ENCODE measurements at regions of chr1 and their contacts with region 1.

Region 1: DNA sequence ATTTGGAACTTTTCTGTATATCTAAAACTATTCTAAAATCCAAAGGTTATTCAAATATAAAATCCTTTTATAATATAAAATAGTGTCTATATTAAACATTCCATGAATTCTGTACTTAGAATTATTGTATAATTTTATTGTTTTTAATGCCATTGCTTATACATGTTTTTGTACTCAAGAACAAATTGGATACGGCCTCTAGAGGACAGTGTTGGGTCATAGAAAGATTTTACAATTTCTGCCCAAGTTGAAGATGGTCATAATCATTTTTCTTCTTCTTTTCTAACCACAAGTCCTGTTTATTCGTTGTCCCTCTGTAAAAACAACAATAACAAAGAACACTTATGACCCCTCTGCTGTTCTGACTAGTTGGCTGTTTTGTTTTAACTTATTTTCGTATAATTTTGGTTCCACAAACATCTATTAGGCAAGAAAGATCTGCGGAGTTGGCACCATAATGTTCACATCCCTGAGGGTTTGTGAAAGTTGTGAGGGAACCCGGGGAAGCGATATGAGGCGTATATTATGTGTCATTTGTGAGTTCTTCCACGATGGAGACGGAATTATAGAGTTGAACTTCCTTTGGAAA is 75.7 kb upstream of the KIF26B start:
- DNase-seq: peak; percentile 77
- ATAC-seq: peak; percentile 69
- H3K4me3 ChIP-seq: no peak overlapping the region
- H3K27ac ChIP-seq: no peak overlapping the region
- H3K4me1 ChIP-seq: peaks cover 2% of the 10 kb centered on the region; the same call in 1 of the 2 replicates
- H3K27me3 ChIP-seq: no peaks in the 10 kb centered on the region
- CTCF ChIP-seq: peak; percentile 94
- POLR2A ChIP-seq: no peak
- RAD21 ChIP-seq: peak; percentile 92

Region 2: GRCh38 chr1:244665771-244666217 is 413.3 kb before region 1 on chr1:
- CTCF ChIA-PET with region 1: no interaction called
- POLR2A ChIA-PET with region 1: no interaction called
- dilution Hi-C with region 1: no loop called
- in situ Hi-C with region 1: no loop called
- intact Hi-C with region 1: no loop called
- DNase-seq: peak; percentile 45
- ATAC-seq: peak; percentile 72
- H3K4me3 ChIP-seq: no peak overlapping the region
- H3K27ac ChIP-seq: no peak overlapping the region
- H3K4me1 ChIP-seq: peaks cover 2% of the 10 kb centered on the region; the same call in 1 of the 2 replicates
- H3K27me3 ChIP-seq: no peaks in the 10 kb centered on the region
- CTCF ChIP-seq: no peak
- POLR2A ChIP-seq: no peak
- RAD21 ChIP-seq: no peak

Region 3: GRCh38 chr1:245121513-245121912 is 42.4 kb after region 1 on chr1:
- CTCF ChIA-PET with region 1: no interaction called
- POLR2A ChIA-PET with region 1: no interaction called
- dilution Hi-C with region 1: no loop called
- in situ Hi-C with region 1: no loop called
- intact Hi-C with region 1: no loop called
- DNase-seq: no peak
- ATAC-seq: no peak
- H3K4me3 ChIP-seq: no peak overlapping the region
- H3K27ac ChIP-seq: no peak overlapping the region
- H3K4me1 ChIP-seq: no peaks in the 10 kb centered on the region
- H3K27me3 ChIP-seq: no peaks in the 10 kb centered on the region
- CTCF ChIP-seq: no peak
- POLR2A ChIP-seq: no peak
- RAD21 ChIP-seq: no peak

Region 4: DNA sequence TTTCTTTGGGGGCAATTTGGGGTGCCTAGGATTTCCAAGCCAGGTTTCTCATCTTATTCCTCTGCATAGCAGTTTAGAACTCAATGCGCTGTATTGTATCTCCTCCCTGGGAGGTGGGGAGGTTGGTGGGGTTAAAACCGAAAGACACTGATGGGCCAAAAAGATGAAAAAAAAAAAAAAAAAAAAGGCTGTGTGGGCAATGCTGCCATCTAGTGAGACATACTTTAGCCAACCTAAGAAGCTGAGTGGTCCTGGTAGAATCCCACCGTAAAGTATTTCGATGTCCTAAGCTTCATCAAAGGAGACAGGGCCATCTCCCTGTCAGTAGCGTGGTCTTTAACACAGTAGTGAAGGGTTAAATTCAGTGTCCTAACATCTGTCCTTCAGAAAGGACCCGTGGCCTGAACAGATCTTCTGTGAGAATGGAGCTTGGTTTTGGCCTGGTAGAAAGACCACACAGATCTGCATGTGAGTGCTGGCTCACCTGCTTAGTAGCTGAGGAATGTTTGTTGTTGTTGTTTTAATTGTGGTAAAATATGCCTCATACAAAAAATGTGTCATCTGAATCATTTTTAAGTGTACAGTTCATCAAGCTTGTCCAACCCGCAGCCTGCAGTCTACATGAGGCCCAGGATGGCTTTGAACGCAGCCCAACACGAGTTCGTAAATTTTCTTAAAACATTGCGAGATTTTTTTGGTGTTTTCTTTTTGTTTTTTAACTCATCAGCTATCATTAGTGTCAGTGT is 301.8 kb after region 1 on chr1:
- CTCF ChIA-PET with region 1: no interaction called
- POLR2A ChIA-PET with region 1: no interaction called
- dilution Hi-C with region 1: no loop called
- in situ Hi-C with region 1: no loop called
- intact Hi-C with region 1: loop called (anchors 10 kb)
- DNase-seq: no peak
- ATAC-seq: no peak; the same call in 1 of the 2 replicates
- H3K4me3 ChIP-seq: no peak overlapping the region
- H3K27ac ChIP-seq: no peak overlapping the region
- H3K4me1 ChIP-seq: no peaks in the 10 kb centered on the region
- H3K27me3 ChIP-seq: no peaks in the 10 kb centered on the region
- CTCF ChIP-seq: peak; percentile 34
- POLR2A ChIP-seq: no peak
- RAD21 ChIP-seq: no peak